ENCODE measurements at regions of chr3 and their contacts with region 1.

Region 1: GRCh38 chr3:85355572-85355971 is 396.8 kb downstream of the CADM2 start:
- DNase-seq: no peak
- ATAC-seq: no peak
- H3K4me3 ChIP-seq: no peak overlapping the region
- H3K27ac ChIP-seq: no peak overlapping the region
- H3K4me1 ChIP-seq: no peaks in the 10 kb centered on the region
- H3K27me3 ChIP-seq: no peaks in the 10 kb centered on the region
- CTCF ChIP-seq: no peak
- EP300 ChIP-seq: no peak
- POLR2A ChIP-seq: no peak
- RAD21 ChIP-seq: no peak

Region 2: GRCh38 chr3:84974347-84974746 is 381.2 kb before region 1 on chr3:
- CTCF ChIA-PET with region 1: no interaction called
- POLR2A ChIA-PET with region 1: no interaction called
- RAD21 ChIA-PET with region 1: no interaction called
- SMC1A ChIA-PET with region 1: no interaction called
- in situ Hi-C with region 1: no loop called
- intact Hi-C with region 1: loop called (anchors 10 kb)
- DNase-seq: no peak
- ATAC-seq: no peak
- H3K4me3 ChIP-seq: no peak overlapping the region
- H3K27ac ChIP-seq: no peak overlapping the region
- H3K4me1 ChIP-seq: no peaks in the 10 kb centered on the region
- H3K27me3 ChIP-seq: no peaks in the 10 kb centered on the region
- CTCF ChIP-seq: no peak
- EP300 ChIP-seq: no peak
- POLR2A ChIP-seq: no peak
- RAD21 ChIP-seq: no peak

Measured in GM12878 (cell line).